ENCODE measurements at regions of chr6 and their contacts with region 1.

Region 1: GRCh38 chr6:90362318-90362717 is 65.7 kb upstream of the BACH2 start:
- DNase-seq: no peak
- ATAC-seq: peak in 1 of 4 donors; percentile 43
- H3K4me3 ChIP-seq: no peak overlapping the region
- H3K27ac ChIP-seq: no peak overlapping the region
- H3K4me1 ChIP-seq: peaks cover 0 to 2% (median 0%) of the 10 kb centered on the region in 12 donors
- H3K27me3 ChIP-seq: no peaks in the 10 kb centered on the region
- CTCF ChIP-seq: no peak
- POLR2A ChIP-seq: no peak

Region 2: GRCh38 chr6:90230548-90231215 is 131.6 kb before region 1 on chr6:
- intact Hi-C with region 1: no loop called
- DNase-seq: no peak
- ATAC-seq: peak in 3 of 4 donors; percentile 40 to 52 (median 52)
- H3K4me3 ChIP-seq: no peak overlapping the region
- H3K27ac ChIP-seq: peak overlapping the region in 3 of 12 donors; percentile 16 to 38 (median 26)
- H3K4me1 ChIP-seq: peaks cover 0 to 48% (median 24%) of the 10 kb centered on the region in 12 donors
- H3K27me3 ChIP-seq: no peaks in the 10 kb centered on the region
- CTCF ChIP-seq: no peak
- POLR2A ChIP-seq: no peak

Region 3: DNA sequence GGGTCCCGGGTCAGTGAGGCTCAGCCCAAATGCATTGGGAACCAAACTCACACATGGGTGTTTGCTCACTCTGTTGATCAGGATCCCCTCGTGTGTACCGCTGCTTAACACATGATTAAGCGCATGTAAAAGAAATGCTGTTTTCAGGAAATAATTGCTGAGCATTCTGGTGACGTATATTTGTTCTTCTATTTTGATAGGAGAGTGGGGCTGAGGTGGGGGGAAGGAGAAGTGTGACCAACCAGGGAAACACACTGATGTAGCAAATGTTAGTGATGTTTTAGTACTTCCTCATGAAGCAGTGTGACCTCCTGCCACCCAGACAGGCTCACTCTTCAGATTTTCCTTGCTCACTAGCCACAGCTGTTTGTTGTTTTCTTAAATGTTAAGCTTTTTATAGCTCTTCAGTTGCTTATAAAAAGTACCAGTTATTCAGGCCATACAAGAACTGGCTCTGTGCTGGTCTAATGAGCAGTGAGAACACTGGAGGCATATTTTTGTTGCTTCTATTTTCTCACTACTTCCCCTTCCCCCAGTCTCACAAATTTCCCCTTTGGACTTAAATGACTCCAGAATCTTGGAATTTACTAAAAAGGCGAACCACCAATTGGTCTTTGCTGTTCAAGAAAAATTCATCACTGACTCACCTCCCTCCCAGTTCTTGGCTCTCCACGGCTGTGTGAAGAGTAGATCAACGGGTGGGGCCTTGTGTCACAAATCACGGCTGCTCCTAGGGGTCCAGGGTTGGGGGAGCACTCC is 13.5 kb after region 1 on chr6:
- intact Hi-C with region 1: loop called in 1 of 10 experiments (anchors 1 kb)
- DNase-seq: peak in 1 of 5 donors; percentile 21
- ATAC-seq: peak; percentile 58 to 87 (median 62)
- H3K4me3 ChIP-seq: no peak overlapping the region
- H3K27ac ChIP-seq: peak overlapping the region in 5 of 12 donors; percentile 26 to 57 (median 42)
- H3K4me1 ChIP-seq: peaks cover 0 to 11% (median 0%) of the 10 kb centered on the region in 12 donors
- H3K27me3 ChIP-seq: no peaks in the 10 kb centered on the region
- CTCF ChIP-seq: no peak
- POLR2A ChIP-seq: no peak

Region 4: DNA sequence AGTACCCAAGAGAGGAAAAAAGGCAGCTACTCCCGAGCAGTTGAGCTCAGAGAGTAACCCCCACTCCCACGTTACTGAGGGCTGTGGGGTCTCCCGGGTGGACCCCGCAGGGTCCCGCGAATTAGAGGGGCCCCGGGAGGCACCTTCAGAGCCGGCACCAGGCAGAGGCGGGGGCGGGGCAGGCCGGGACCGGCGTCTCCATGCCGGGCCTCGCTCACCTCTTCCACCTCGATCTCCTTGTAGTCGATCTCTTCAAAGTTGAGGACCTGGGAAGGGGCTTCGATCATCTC is 224.2 kb after region 1 on chr6:
- intact Hi-C with region 1: no loop called
- DNase-seq: no peak
- ATAC-seq: peak in 3 of 4 donors; percentile 28 to 48 (median 48)
- H3K4me3 ChIP-seq: peak overlapping the region; percentile 67 to 99 (median 95)
- H3K27ac ChIP-seq: peak overlapping the region; percentile 86 to 96 (median 94)
- H3K4me1 ChIP-seq: peaks cover 8 to 46% (median 32%) of the 10 kb centered on the region in 12 donors
- H3K27me3 ChIP-seq: peaks cover 0 to 3% (median 0%) of the 10 kb centered on the region in 9 donors
- CTCF ChIP-seq: no peak
- POLR2A ChIP-seq: no peak

Measured in heart left ventricle (tissue), 16 donors.